ENCODE measurements at regions of chr5 and their contacts with region 1.

Region 1: GRCh38 chr5:14322437-14323187 is 179.5 kb downstream of the TRIO start:
- DNase-seq: no peak
- ATAC-seq: no peak

Region 2: DNA sequence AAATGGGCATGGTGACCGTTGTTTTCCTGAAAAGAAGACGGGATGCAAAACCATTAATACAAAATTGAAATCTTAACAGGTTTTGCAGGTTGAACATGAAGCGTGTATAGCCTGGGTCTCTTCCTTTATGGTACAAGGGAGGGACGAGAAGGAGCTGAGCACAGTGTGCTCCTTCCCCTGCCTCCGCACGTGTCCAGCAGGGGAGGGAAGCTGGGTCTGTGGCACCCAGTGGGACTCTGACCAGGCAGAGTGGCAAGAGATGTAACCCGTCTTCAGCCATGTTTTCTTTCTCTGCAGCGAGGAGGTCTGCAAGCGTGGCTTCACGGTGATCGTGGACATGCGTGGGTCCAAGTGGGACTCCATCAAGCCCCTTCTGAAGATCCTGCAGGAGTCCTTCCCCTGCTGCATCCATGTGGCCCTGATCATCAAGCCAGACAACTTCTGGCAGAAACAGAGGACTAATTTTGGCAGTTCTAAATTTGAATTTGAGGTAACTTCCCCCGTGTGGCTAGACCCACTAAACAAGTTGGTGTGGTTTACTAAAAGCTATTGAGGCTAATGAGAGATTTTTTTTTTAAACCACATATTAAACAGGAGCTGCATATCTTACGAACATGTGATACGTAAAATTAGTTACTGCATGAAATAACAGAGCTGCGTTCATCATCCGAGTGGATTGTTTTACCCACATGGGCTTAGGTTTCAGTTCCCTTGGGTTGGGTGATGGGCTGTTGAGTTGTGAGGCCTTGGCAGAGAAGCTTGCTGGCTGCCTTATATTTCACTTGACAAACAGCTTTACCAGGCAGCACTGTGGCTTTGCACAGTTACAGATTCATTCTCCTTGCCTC is 35.8 kb before region 1 on chr5:
- intact Hi-C with region 1: no loop called
- DNase-seq: no peak
- ATAC-seq: no peak

Region 3: DNA sequence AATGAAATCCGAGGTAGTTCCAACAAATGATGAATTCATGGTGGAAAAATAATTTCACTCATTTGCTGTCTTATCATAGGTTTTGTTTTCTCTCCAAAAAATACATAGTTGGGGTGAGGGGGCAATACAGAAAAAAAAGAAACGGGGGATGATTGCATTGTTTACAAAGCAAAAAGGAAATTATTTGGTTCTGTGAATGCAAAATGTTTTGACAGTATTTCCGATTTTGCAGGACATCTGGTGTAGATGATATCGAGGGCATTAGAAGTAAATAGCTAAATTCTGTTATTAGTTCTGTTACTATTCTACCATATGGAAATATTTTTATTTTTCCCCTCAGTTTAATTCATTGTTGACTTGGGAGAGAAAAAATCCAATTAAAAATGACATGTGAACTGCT is 1655.2 kb after region 1 on chr5:
- intact Hi-C with region 1: no loop called
- DNase-seq: no peak
- ATAC-seq: no peak

Region 4: DNA sequence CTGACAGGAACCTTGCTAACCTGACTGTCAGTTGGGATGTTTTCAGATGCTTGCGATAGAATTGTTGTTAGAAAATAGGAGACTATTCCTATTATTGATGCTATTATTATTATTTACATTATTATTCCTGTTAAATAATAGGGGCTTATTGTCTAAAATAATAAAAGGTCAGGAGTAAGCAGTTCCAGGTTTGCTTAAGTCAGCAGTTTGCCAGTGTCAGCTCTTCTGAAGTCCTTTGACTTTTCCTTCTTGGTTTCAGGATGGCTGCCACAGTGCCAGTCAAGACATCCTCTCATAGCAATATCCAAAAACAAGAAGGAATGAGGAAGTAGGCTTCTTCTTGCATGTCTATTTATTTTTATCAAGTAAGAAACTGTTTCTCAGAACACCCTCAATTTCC is 1998.7 kb after region 1 on chr5:
- intact Hi-C with region 1: loop called (anchors 5 kb)
- DNase-seq: no peak
- ATAC-seq: no peak

Measured in sciatic nerve (tissue), 2 donors.